Activated naive CD4-positive, alpha-beta T cell treated with anti-CD3 and anti-CD28 coated beads, Interleukin-2, amount 10 ng/mL, durations not matched to agents 7 days and 5 days (primary cell): ENCODE measurements at regions of chr1 and their contacts with region 1.

Region 1: DNA sequence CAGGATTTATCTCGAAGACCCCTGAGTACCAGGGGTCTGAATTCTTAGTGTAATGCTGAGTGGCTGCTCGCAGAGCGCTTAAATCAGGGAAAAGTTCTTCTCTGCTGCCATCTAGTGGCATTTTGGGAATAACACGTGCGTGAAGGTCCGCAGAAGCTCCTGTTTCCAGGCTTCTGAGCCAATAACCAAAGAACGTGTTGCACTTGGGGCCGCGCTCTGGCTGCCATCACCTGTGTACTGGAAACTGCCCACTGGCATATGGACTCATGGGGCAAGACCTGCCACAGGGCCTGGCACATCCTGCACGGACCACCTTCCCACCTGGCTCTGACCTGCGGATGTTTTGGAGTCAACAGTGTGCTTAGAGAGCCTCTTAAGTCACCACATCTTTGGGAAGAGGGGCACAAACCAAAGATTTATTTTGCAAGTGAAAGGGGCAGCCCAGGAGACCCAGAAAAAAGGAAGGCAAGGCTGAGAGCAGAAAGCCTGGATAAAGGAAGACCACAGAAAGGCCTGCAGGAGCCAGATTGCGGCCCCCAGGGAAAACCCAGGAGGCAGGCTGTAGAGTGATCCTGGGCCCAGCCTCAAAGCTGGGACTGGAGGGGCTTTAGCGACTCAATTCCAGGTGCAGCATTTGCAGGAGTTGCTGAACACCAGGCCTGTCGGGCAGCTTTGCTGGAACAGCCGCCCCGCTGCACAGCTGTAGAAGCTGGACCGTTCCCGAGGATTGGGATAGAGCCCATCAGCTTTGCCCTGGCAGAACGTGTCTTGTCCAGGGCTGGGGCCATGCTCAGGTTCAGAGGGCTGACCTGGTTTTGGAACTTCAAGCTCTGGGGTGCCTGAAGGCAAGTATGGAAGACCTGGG is 13.0 kb downstream of the CHIT1 start:
- DNase-seq: peak; percentile 66
- H3K4me3 Mint-ChIP-seq: no peak overlapping the region
- H3K27ac Mint-ChIP-seq: no peak overlapping the region
- H3K4me1 Mint-ChIP-seq: no peaks in the 10 kb centered on the region
- H3K27me3 Mint-ChIP-seq: peaks cover 56% of the 10 kb centered on the region

Region 2: GRCh38 chr1:203031467-203031866 is 185.0 kb before region 1 on chr1:
- CTCF ChIA-PET with region 1: interaction called, 12 read pairs
- DNase-seq: no peak
- H3K4me3 Mint-ChIP-seq: no peak overlapping the region
- H3K27ac Mint-ChIP-seq: no peak overlapping the region
- H3K4me1 Mint-ChIP-seq: peaks cover 16% of the 10 kb centered on the region
- H3K27me3 Mint-ChIP-seq: peaks cover 27% of the 10 kb centered on the region

Region 3: GRCh38 chr1:203084588-203085502 is 131.7 kb before region 1 on chr1:
- CTCF ChIA-PET with region 1: interaction called, 18 read pairs
- DNase-seq: peak; percentile 47
- H3K4me3 Mint-ChIP-seq: no peak overlapping the region
- H3K27ac Mint-ChIP-seq: no peak overlapping the region
- H3K4me1 Mint-ChIP-seq: no peaks in the 10 kb centered on the region
- H3K27me3 Mint-ChIP-seq: peaks cover 31% of the 10 kb centered on the region

Region 4: GRCh38 chr1:203117611-203118575 is 98.6 kb before region 1 on chr1:
- CTCF ChIA-PET with region 1: interaction called, 48 read pairs
- DNase-seq: peak; percentile 60
- H3K4me3 Mint-ChIP-seq: no peak overlapping the region
- H3K27ac Mint-ChIP-seq: no peak overlapping the region
- H3K4me1 Mint-ChIP-seq: peaks cover 4% of the 10 kb centered on the region
- H3K27me3 Mint-ChIP-seq: peaks cover 68% of the 10 kb centered on the region